ENCODE measurements at regions of chr16 and their contacts with region 1.

Region 1: DNA sequence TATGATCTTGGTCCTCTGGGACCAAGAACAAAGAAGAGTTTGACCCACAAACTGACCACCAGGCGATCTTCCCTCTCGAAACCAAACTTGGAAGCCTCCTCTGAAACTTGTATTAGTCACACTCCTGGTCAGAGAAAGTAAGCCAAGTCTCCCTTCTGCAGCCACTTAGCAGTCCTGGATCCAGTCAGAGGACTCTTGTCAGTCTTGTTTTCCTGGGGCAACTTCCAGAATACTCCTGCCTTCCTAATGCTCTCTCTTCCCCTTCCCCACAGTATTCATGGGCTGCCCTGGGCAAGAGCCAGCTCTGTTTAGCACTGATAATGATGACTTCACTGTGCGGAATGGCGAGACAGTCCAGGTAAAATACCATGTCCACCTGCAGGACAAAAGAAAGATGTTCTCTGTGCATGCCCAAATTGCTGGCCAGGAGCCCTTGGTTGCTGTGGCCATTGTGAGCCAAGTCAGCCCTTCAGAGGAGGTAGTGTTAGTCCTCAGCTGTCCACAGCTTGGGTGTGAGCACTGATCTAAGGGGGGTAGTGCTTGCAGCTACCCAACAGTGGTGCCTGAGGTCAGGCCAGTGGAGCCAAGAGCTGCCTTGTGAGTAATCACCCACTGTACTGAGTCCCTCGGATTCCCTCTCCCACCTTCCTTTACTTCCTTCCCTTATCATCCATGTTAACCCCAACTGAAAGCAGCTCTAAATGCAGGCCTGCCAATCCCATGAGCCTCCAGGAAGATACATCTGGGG is 31.2 kb downstream of the CDH3 start:
- DNase-seq: no peak
- H3K4me3 ChIP-seq: no peak overlapping the region
- H3K27ac ChIP-seq: no peak overlapping the region
- H3K4me1 ChIP-seq: no peaks in the 10 kb centered on the region
- H3K27me3 ChIP-seq: no peaks in the 10 kb centered on the region
- CTCF ChIP-seq: no peak

Region 2: GRCh38 chr16:68190736-68191510 is 485.4 kb before region 1 on chr16:
- CTCF ChIA-PET with region 1: no interaction called
- POLR2A ChIA-PET with region 1: no interaction called
- intact Hi-C with region 1: no loop called
- DNase-seq: no peak
- H3K4me3 ChIP-seq: no peak overlapping the region
- H3K27ac ChIP-seq: no peak overlapping the region
- H3K4me1 ChIP-seq: no peaks in the 10 kb centered on the region
- H3K27me3 ChIP-seq: no peaks in the 10 kb centered on the region
- CTCF ChIP-seq: no peak

Region 3: GRCh38 chr16:68658258-68659008 is 17.9 kb before region 1 on chr16:
- CTCF ChIA-PET with region 1: no interaction called
- POLR2A ChIA-PET with region 1: interaction called, 11 read pairs
- intact Hi-C with region 1: no loop called
- DNase-seq: peak; percentile 16
- H3K4me3 ChIP-seq: no peak overlapping the region
- H3K27ac ChIP-seq: no peak overlapping the region
- H3K4me1 ChIP-seq: no peaks in the 10 kb centered on the region
- H3K27me3 ChIP-seq: no peaks in the 10 kb centered on the region
- CTCF ChIP-seq: no peak

Region 4: GRCh38 chr16:69132424-69133252 is 456.4 kb after region 1 on chr16 and contains the starts of genes CHTF8 and UTP4:
- CTCF ChIA-PET with region 1: no interaction called
- POLR2A ChIA-PET with region 1: no interaction called
- intact Hi-C with region 1: no loop called
- DNase-seq: peak; percentile 93
- H3K4me3 ChIP-seq: peak within 1 kb of the TSS; percentile 90
- H3K27ac ChIP-seq: peak within 1 kb of the TSS; percentile 97
- H3K4me1 ChIP-seq: peaks cover 17% of the 10 kb centered on the region
- H3K27me3 ChIP-seq: no peaks in the 10 kb centered on the region
- CTCF ChIP-seq: no peak
- total RNA-seq, gene CHTF8: 113 and 121 TPM in 2 replicates
- total RNA-seq, gene UTP4: 119 and 146 TPM in 2 replicates

Measured in A673 (cell line).